ENCODE measurements at regions of chr12 and their contacts with region 1.

Region 1: DNA sequence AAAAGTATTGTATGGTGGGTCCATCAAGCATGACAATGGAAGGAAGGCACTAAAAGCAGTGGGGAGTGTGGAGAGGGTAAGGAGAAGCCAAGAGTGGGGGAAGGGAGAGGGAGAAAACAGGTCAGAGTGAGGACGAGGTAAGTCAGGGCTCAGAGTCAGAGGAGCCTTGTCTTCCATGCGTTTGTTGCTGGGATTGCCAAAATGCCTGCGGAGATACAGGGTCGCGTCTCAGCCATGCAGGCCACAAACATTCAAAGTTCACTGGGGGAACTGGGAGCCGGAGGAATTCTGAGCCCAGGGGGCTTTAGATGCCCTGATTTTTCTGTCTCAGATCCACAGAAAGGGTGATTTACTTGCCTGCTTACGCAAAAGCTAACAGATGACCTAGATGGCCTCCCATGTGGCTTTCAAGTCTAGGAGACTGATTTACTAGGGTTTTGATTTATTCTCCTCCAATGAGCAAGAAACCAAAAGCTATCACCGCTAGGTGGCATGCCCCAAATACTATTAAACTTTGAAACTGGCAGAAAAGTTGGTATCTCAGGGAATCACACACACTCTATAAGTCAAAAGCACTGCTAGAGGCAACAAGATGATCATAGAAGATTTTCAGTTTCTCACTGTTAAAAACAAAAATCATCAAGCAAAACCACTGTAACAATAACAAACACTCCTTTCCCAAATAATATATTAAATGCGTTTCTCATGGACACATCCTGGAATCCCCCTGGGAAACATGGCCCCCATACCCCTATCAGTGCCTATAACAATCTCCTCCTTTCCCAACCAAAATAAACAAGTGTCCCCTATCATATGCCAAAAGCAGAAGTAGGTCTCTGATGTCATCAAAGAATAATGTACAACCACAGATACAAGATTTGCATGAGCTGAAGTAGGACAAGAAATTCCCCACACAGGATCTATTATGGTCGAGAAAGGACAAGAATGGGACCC is 26.6 kb upstream of the MDM1 start:
- DNase-seq: peak; percentile 62
- H3K4me3 ChIP-seq: no peak overlapping the region
- CTCF ChIP-seq: peak; percentile 36

Region 2: DNA sequence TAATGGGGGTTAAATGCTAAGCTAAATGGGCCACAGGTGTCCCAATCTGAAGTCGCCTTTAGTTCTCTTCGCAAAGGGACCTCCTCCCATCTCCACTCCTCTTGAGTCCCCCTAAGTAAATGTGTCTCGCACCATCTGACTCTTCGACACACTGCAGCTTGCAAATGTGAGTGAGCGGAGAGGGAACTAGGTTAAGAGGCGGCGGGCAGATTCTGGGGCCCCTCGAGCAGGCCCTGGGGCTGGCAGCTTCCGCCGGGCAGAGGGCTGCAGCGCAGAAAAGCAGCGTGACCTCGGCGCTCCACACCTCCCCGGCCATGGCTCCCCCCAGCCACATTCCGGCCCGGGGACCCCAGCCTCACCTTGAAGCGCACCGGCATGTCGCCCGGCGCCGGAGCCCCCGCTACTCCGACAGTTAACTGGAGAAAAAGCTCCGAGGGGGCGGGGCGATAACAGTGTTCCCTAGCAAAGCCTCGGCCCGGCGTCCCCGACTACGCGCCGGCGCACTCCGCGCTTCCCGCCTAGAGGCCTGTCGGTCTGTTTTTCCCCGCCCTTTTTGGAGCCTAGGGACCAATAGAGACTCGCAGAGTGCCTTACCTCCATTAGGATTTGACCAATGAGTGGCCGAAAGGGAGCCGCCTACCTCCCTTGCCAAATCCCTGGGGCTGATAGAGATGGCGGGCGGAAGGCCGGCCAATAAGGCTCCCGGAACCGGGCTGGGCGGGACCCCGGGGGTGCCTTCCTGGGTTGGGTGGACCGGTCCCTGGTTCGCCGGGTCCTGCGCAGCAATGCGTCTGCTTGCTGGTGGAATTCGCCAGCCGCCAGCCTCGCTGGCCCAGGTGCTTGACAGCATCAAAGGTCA is 26.7 kb before region 1 on chr12 and contains the start of gene MDM1:
- CTCF ChIA-PET with region 1: interaction called, 16 read pairs
- POLR2A ChIA-PET with region 1: no interaction called
- DNase-seq: peak; percentile 84
- H3K4me3 ChIP-seq: peak within 1 kb of the TSS; percentile 74
- CTCF ChIP-seq: no peak

Region 3: GRCh38 chr12:68340404-68341270 is 18.2 kb before region 1 on chr12:
- CTCF ChIA-PET with region 1: interaction called, 16 read pairs
- POLR2A ChIA-PET with region 1: no interaction called
- DNase-seq: no peak
- H3K4me3 ChIP-seq: no peak overlapping the region
- CTCF ChIP-seq: no peak

Region 4: GRCh38 chr12:68378872-68379782 is 20.3 kb after region 1 on chr12:
- CTCF ChIA-PET with region 1: interaction called, 13 read pairs
- POLR2A ChIA-PET with region 1: no interaction called
- DNase-seq: no peak
- H3K4me3 ChIP-seq: no peak overlapping the region
- CTCF ChIP-seq: no peak

Region 5: GRCh38 chr12:68610370-68611093 is 251.7 kb after region 1 on chr12 and contains the start of gene RAP1B:
- CTCF ChIA-PET with region 1: interaction called, 10 read pairs
- POLR2A ChIA-PET with region 1: no interaction called
- DNase-seq: no peak
- H3K4me3 ChIP-seq: peak within 1 kb of the TSS; percentile 84
- CTCF ChIP-seq: no peak

Region 6: DNA sequence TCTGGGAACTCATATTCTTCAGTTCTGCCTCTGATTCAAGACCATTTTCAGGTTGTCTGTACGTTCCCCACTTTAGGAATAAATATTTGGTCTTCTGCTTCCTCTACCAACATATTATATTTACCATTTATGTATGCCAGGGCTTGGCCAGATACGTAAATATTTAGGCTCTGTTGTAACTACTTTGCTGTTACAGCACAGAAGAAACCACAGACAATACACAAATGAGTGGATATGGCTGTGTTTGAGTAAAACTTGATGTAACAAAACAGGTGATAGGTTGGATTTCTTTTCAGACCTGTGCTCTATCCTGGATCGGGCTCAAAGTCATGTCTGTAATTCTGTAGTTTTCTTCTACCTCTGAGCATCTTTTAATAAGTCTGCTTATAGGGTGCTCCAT is 289.4 kb after region 1 on chr12:
- CTCF ChIA-PET with region 1: interaction called, 24 read pairs
- POLR2A ChIA-PET with region 1: no interaction called
- DNase-seq: no peak
- H3K4me3 ChIP-seq: no peak overlapping the region
- CTCF ChIP-seq: no peak